Activated CD8-positive, alpha-beta T cell treated with anti-CD3 and anti-CD28 coated beads, Interleukin-2, amount 10 ng/mL, durations not matched to agents 7 days and 5 days (primary cell): ENCODE measurements at regions of chr19 and their contacts with region 1.

Region 1: DNA sequence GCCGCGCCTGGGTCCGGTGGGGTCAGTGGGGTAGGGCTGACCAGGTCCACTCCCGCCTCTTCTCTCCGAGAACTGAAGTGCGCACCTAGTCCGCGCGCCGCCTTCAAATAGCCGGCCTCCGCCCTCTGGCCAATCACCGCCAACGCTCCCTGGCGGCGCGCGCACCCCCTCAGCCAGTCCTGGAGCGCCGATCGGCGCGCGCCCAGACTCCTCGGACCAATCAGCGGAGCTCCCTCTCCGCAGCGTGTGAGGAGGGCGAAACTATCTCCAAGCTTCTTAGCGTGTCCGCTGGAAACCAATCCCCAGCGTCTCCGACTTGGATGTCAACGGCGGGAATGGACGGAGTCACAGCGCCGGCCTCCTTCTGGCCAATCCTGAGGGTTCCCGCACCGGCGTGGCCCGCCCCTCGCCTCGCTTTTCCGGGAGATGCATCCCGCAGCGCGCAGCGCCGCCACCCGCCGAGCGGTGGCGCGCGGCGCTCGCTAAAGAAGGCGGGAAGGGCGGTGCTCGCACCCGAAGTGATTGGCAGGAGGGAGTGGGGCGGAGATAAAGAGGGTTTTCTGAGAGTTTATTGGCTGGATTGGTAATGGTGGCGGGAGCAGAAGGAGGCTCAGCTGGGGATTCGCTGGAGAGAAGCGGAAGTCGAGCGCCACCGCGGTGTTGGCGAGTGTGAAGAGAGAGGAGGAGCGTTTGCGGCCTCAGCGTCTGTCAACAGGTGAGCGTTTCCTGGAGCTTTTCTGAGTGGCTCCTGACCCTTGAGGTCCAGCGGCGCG is at the start of gene ASF1B:
- DNase-seq: peak; percentile 99
- ATAC-seq: peak; percentile 89
- H3K4me3 Mint-ChIP-seq: peak within 1 kb of the TSS; percentile 85
- H3K27ac Mint-ChIP-seq: peak within 1 kb of the TSS; percentile 94
- H3K4me1 Mint-ChIP-seq: peaks cover 48% of the 10 kb centered on the region
- H3K27me3 Mint-ChIP-seq: no peaks in the 10 kb centered on the region
- total RNA-seq, gene ASF1B: 131 TPM

Region 2: GRCh38 chr19:14039181-14039580 is 97.5 kb before region 1 on chr19:
- CTCF ChIA-PET with region 1: no interaction called
- POLR2A ChIA-PET with region 1: no interaction called
- DNase-seq: no peak
- ATAC-seq: no peak
- H3K4me3 Mint-ChIP-seq: no peak overlapping the region
- H3K27ac Mint-ChIP-seq: peak overlapping the region; percentile 30
- H3K4me1 Mint-ChIP-seq: peaks cover 21% of the 10 kb centered on the region
- H3K27me3 Mint-ChIP-seq: no peaks in the 10 kb centered on the region

Region 3: DNA sequence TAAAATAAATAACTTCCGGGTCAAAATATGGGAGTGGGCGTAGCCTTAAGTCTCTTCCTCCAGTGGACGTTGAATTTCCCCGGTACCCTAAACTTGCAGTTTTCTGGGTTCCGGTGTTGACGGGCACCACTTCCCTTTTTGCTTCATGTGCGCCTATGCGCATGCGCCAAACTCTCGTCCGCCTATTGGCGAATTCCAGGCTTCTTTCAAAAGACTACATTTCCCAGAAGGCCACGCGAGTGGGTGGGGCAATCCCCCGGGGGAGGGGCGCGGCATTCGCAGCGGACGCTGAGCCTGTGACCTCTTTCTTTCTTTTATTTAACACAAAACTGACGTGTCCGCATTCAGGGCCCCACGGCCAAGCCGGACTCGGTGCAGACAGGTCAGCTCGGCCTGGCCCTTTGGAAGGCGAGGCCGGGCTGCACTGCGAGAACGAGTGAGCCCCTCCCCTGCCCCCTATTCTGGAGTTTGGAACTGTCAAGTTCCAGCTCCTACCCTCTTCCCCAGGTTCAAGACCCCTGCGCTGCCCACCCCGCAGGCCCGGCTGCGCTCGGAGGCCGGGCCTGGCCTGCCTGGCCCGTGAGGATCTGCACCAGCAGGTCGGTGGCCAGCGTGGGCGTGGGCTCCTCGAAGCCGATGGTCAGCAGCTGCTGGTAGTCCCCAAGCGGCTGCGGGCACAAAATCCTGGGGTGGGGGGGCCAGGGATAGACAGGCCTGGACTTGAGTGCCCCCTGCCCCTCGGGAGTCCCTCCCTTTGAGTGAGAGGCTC is 55.2 kb before region 1 on chr19:
- CTCF ChIA-PET with region 1: interaction called, 13 read pairs
- POLR2A ChIA-PET with region 1: interaction called, 8 read pairs
- DNase-seq: peak; percentile 100
- ATAC-seq: peak; percentile 96
- H3K4me3 Mint-ChIP-seq: peak overlapping the region; percentile 92
- H3K27ac Mint-ChIP-seq: peak overlapping the region; percentile 92
- H3K4me1 Mint-ChIP-seq: peaks cover 18% of the 10 kb centered on the region
- H3K27me3 Mint-ChIP-seq: no peaks in the 10 kb centered on the region

Region 4: GRCh38 chr19:14122924-14123323 is 13.8 kb before region 1 on chr19:
- CTCF ChIA-PET with region 1: interaction called, 45 read pairs
- POLR2A ChIA-PET with region 1: interaction called, 5 read pairs
- DNase-seq: no peak
- ATAC-seq: no peak
- H3K4me3 Mint-ChIP-seq: no peak overlapping the region
- H3K27ac Mint-ChIP-seq: no peak overlapping the region
- H3K4me1 Mint-ChIP-seq: peaks cover 18% of the 10 kb centered on the region
- H3K27me3 Mint-ChIP-seq: no peaks in the 10 kb centered on the region

Region 5: DNA sequence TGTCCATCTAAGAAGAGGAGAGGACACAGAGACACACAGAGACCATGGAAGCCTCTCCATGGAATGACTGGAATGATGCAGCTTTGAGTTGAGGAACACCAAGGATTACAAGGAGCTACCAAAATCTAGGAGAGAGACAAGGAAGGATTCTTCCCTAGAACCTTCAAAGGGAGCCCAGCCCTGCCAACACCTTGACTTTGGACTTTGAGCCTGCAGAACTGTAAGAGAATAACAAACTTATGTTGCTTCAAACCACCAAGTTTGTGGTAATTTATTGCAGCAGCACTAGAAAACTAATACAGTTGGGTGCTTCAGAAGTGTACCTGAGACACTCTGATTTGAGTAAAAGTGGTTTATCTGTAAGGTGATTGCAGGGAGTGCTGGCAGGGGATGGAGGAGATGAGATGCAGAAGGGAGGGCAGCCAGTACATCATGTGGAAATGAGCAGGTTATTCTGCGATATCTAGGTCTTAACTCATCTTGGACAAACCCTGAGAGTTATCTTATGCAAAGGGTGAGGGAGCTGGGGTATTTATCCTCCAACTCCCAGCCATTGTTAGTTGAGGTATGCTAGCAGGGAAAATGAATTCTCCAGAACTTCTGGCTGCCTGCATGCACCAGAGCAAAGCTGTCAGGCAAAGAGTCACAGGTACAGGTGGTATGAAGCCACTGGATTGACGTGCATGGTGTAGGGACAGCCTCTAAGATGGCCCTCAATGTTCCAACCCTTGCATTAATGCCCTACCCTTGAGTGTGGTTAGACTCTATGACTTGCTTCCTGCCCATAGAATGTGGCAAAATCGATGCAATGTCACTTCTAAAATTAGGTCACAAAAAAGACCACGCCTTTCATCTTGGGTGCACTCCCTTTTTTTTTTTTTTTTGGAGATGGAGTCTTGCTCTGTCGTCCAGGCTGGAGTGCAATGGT is 100.6 kb after region 1 on chr19:
- CTCF ChIA-PET with region 1: no interaction called
- POLR2A ChIA-PET with region 1: no interaction called
- DNase-seq: no peak
- ATAC-seq: no peak
- H3K4me3 Mint-ChIP-seq: no peak overlapping the region
- H3K27ac Mint-ChIP-seq: no peak overlapping the region
- H3K4me1 Mint-ChIP-seq: peaks cover 11% of the 10 kb centered on the region
- H3K27me3 Mint-ChIP-seq: peaks cover 4% of the 10 kb centered on the region

Region 6: DNA sequence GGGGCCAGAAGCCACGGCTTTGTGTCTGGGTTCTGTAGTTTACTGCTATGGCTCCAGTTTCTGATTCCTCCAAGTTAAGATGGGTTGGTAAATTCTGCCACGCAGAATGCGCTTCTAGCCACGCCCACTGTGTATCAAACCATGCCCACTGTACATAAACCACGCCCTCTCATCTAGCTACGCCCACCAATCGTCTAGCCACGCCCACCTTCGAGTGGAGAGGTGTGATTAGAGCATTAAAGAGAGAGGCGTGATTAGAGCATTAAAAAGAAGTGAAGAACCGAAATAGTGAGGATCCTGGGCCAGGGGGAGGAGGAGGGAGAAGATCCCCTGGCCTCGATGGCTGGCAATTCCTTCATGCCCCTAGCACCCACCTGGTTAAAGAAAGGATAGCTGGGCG is 200.8 kb after region 1 on chr19:
- CTCF ChIA-PET with region 1: interaction called, 11 read pairs
- POLR2A ChIA-PET with region 1: no interaction called
- DNase-seq: peak; percentile 45
- ATAC-seq: peak; percentile 58
- H3K4me3 Mint-ChIP-seq: no peak overlapping the region
- H3K27ac Mint-ChIP-seq: no peak overlapping the region
- H3K4me1 Mint-ChIP-seq: peaks cover 10% of the 10 kb centered on the region
- H3K27me3 Mint-ChIP-seq: no peaks in the 10 kb centered on the region

Region 7: DNA sequence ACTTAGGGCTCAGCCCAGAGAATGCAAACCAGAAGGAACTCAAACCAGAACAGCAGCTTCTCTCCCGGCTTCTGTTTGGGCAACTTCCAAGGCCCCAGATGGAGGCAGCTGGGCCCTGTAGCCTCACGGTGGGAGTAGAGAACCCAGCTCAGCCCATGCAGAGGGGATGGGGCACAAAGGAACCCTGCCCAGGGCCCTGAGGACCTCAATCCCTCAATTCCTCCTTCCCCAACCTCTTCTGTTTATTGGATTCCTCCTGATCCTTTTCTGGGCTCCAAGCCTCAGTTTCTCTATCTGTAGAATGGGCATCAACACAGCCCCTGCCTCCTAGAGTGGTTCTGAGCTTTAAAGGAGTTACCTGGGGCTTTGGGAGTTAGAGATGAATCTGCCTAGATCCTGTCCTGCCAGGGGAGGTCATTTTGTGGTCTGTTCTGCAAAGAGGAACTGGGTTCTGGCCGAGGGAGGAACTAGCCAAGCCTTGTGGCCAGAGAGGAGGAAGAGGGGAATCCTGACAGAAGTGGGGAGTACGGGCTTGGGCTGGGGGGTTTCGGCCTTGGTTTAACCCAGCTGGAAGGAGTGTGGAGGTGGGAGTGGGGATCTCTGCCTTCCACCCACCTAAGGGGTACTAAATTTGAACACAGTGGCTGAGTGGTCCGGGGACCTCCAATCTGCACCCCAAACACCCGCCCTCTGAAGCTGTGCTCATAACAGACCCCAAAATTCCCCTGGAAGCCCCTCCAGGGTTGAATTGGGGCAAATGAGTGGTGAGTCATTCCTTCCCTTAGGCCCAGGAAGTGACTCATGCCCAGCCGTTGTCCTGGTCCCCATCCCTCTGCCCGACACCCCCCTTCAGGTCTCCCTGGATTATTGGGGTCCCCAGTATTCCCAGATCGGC is 247.2 kb after region 1 on chr19:
- CTCF ChIA-PET with region 1: interaction called, 25 read pairs
- POLR2A ChIA-PET with region 1: interaction called, 11 read pairs
- DNase-seq: peak; percentile 70
- ATAC-seq: peak; percentile 10
- H3K4me3 Mint-ChIP-seq: peak overlapping the region; percentile 86
- H3K27ac Mint-ChIP-seq: peak overlapping the region; percentile 89
- H3K4me1 Mint-ChIP-seq: peaks cover 45% of the 10 kb centered on the region
- H3K27me3 Mint-ChIP-seq: no peaks in the 10 kb centered on the region

Region 8: GRCh38 chr19:14472202-14472938 is 335.7 kb after region 1 on chr19:
- CTCF ChIA-PET with region 1: interaction called, 10 read pairs
- POLR2A ChIA-PET with region 1: no interaction called
- DNase-seq: peak; percentile 88
- ATAC-seq: peak; percentile 73
- H3K4me3 Mint-ChIP-seq: no peak overlapping the region
- H3K27ac Mint-ChIP-seq: no peak overlapping the region
- H3K4me1 Mint-ChIP-seq: peaks cover 43% of the 10 kb centered on the region
- H3K27me3 Mint-ChIP-seq: peaks cover 16% of the 10 kb centered on the region